CD4-positive, alpha-beta memory T cell (primary cell): ENCODE measurements at regions of chr1 and their contacts with region 1.

Region 1: GRCh38 chr1:150957666-150958065 is 17.0 kb downstream of the CERS2 start:
- DNase-seq: no peak
- H3K4me3 ChIP-seq: no peak overlapping the region
- H3K4me3 Mint-ChIP-seq: no peak overlapping the region
- H3K27ac ChIP-seq: no peak overlapping the region
- H3K27ac Mint-ChIP-seq: no peak overlapping the region
- H3K4me1 ChIP-seq: no peaks in the 10 kb centered on the region
- H3K4me1 Mint-ChIP-seq: peaks cover 0 to 8% (median 2%) of the 10 kb centered on the region in 4 donors
- H3K27me3 ChIP-seq: no peaks in the 10 kb centered on the region
- H3K27me3 Mint-ChIP-seq: no peaks in the 10 kb centered on the region

Region 2: GRCh38 chr1:150121236-150121862 is 836.3 kb before region 1 on chr1:
- CTCF ChIA-PET with region 1: no interaction called
- POLR2A ChIA-PET with region 1: no interaction called
- intact Hi-C with region 1: no loop called
- DNase-seq: no peak
- H3K4me3 ChIP-seq: no peak overlapping the region
- H3K4me3 Mint-ChIP-seq: no peak overlapping the region
- H3K27ac ChIP-seq: no peak overlapping the region
- H3K27ac Mint-ChIP-seq: peak overlapping the region in 6 of 7 donors; percentile 1 to 65 (median 47)
- H3K4me1 ChIP-seq: peaks cover 12% of the 10 kb centered on the region
- H3K4me1 Mint-ChIP-seq: peaks cover 21 to 39% (median 29%) of the 10 kb centered on the region in 4 donors
- H3K27me3 ChIP-seq: no peaks in the 10 kb centered on the region
- H3K27me3 Mint-ChIP-seq: no peaks in the 10 kb centered on the region

Region 3: GRCh38 chr1:150876119-150876454 is 81.6 kb before region 1 on chr1:
- CTCF ChIA-PET with region 1: no interaction called
- POLR2A ChIA-PET with region 1: no interaction called
- intact Hi-C with region 1: no loop called
- DNase-seq: no peak
- H3K4me3 ChIP-seq: peak overlapping the region; percentile 60 to 93
- H3K4me3 Mint-ChIP-seq: peak overlapping the region; percentile 88 to 97 (median 95)
- H3K27ac ChIP-seq: peak overlapping the region; percentile 81
- H3K27ac Mint-ChIP-seq: peak overlapping the region; percentile 88 to 97 (median 95)
- H3K4me1 ChIP-seq: peaks cover 25% of the 10 kb centered on the region
- H3K4me1 Mint-ChIP-seq: peaks cover 23 to 47% (median 35%) of the 10 kb centered on the region in 4 donors
- H3K27me3 ChIP-seq: no peaks in the 10 kb centered on the region
- H3K27me3 Mint-ChIP-seq: no peaks in the 10 kb centered on the region

Region 4: GRCh38 chr1:150895601-150896000 is 62.1 kb before region 1 on chr1:
- CTCF ChIA-PET with region 1: no interaction called
- POLR2A ChIA-PET with region 1: no interaction called
- intact Hi-C with region 1: no loop called
- DNase-seq: no peak
- H3K4me3 ChIP-seq: no peak overlapping the region
- H3K4me3 Mint-ChIP-seq: no peak overlapping the region
- H3K27ac ChIP-seq: no peak overlapping the region
- H3K27ac Mint-ChIP-seq: peak overlapping the region in 1 of 7 donors; percentile 3
- H3K4me1 ChIP-seq: no peaks in the 10 kb centered on the region
- H3K4me1 Mint-ChIP-seq: peaks cover 3 to 4% (median 4%) of the 10 kb centered on the region in 4 donors
- H3K27me3 ChIP-seq: no peaks in the 10 kb centered on the region
- H3K27me3 Mint-ChIP-seq: peaks cover 2% of the 10 kb centered on the region in 2 donors

Region 5: GRCh38 chr1:150970808-150971592 is 13.3 kb after region 1 on chr1:
- CTCF ChIA-PET with region 1: interaction called, 11 read pairs
- POLR2A ChIA-PET with region 1: interaction called, 6 read pairs
- intact Hi-C with region 1: no loop called
- DNase-seq: no peak
- H3K4me3 ChIP-seq: no peak overlapping the region
- H3K4me3 Mint-ChIP-seq: peak overlapping the region in 6 of 8 donors; percentile 35 to 95 (median 78)
- H3K27ac ChIP-seq: no peak overlapping the region
- H3K27ac Mint-ChIP-seq: peak overlapping the region; percentile 77 to 95 (median 92)
- H3K4me1 ChIP-seq: peaks cover 46% of the 10 kb centered on the region
- H3K4me1 Mint-ChIP-seq: peaks cover 29 to 50% (median 39%) of the 10 kb centered on the region in 4 donors
- H3K27me3 ChIP-seq: no peaks in the 10 kb centered on the region
- H3K27me3 Mint-ChIP-seq: no peaks in the 10 kb centered on the region

Region 6: DNA sequence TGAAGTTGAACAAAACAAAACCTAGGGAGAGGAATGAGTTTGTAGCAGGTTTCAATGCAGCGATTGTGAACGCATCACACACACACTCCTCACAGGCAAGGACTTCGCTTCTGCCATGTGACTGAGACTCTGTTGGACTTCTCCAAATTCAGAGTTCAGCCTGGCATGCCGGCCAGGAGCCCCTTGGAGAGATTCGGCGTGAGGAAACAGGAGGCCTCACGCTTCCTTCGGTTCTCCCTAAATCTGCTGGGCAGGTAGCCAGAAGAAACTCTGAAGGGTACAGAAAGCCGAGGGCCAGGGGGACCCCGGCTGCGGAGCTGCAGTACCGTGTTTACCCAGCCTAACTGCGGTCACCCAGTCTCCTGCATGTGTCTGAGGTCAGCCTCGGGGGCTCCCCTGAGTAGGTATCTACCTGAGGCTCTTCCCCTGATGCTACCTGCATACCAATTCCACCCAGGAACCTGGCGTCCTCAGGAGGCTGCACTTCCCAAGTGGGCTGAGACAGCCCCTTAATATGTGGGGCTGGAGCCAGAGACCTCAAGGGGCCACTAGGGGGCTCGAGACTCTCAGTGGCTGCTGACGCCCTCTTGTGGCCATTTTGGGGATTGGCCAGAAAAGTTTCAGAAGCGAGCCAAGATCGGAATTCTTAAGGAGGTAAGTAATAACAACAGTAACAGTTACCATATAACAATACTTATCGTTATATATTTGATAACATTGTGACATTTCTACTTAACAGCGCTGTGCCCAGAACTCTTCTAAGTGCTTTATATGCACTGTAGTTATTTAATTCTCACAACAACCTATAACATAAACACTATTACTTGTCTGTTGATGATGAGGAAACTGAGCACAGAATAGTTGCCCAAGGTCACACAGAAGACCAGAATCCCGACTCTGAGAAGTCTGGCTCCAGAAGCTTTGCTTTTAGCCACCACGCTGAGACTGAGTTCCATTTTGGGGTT is 21.7 kb after region 1 on chr1:
- CTCF ChIA-PET with region 1: interaction called, 19 read pairs
- POLR2A ChIA-PET with region 1: interaction called, 5 read pairs
- intact Hi-C with region 1: no loop called
- DNase-seq: peak; percentile 83 to 87 (median 85)
- H3K4me3 ChIP-seq: peak overlapping the region in 1 of 2 donors; percentile 52
- H3K4me3 Mint-ChIP-seq: peak overlapping the region in 4 of 8 donors; percentile 29 to 59 (median 41)
- H3K27ac ChIP-seq: peak overlapping the region; percentile 11
- H3K27ac Mint-ChIP-seq: peak overlapping the region in 6 of 7 donors; percentile 48 to 83 (median 64)
- H3K4me1 ChIP-seq: peaks cover 39% of the 10 kb centered on the region
- H3K4me1 Mint-ChIP-seq: peaks cover 20 to 44% (median 31%) of the 10 kb centered on the region in 4 donors
- H3K27me3 ChIP-seq: no peaks in the 10 kb centered on the region
- H3K27me3 Mint-ChIP-seq: no peaks in the 10 kb centered on the region